HepG2 (cell line): ENCODE measurements at regions of chr15 and their contacts with region 1.

Region 1: GRCh38 chr15:47720555-47720954 is 3.2 kb downstream of the SEMA6D start:
- DNase-seq: no peak
- ATAC-seq: no peak
- H3K4me3 ChIP-seq: no peak overlapping the region
- H3K27ac ChIP-seq: no peak overlapping the region
- H3K4me1 ChIP-seq: no peaks in the 10 kb centered on the region
- H3K27me3 ChIP-seq: peaks cover 2 to 32% of the 10 kb centered on the region in 2 experiments; a peak in 3 of 5 replicates
- CTCF ChIP-seq: no peak
- EP300 ChIP-seq: no peak
- POLR2A ChIP-seq: no peak
- RAD21 ChIP-seq: no peak

Region 2: GRCh38 chr15:48046813-48047438 is 326.4 kb after region 1 on chr15:
- CTCF ChIA-PET with region 1: no interaction called
- POLR2A ChIA-PET with region 1: no interaction called
- in situ Hi-C with region 1: no loop called
- intact Hi-C with region 1: no loop called
- DNase-seq: no peak
- ATAC-seq: no peak
- H3K4me3 ChIP-seq: no peak overlapping the region
- H3K27ac ChIP-seq: no peak overlapping the region
- H3K4me1 ChIP-seq: no peaks in the 10 kb centered on the region
- H3K27me3 ChIP-seq: no peaks in the 10 kb centered on the region
- CTCF ChIP-seq: no peak
- EP300 ChIP-seq: no peak
- POLR2A ChIP-seq: no peak
- RAD21 ChIP-seq: no peak

Region 3: GRCh38 chr15:49530106-49530505 is 1809.6 kb after region 1 on chr15:
- CTCF ChIA-PET with region 1: no interaction called
- POLR2A ChIA-PET with region 1: no interaction called
- in situ Hi-C with region 1: no loop called
- intact Hi-C with region 1: loop called (anchors 5 kb)
- DNase-seq: peak; percentile 3
- ATAC-seq: no peak
- H3K4me3 ChIP-seq: no peak overlapping the region
- H3K27ac ChIP-seq: no peak overlapping the region
- H3K4me1 ChIP-seq: no peaks in the 10 kb centered on the region
- H3K27me3 ChIP-seq: no peaks in the 10 kb centered on the region
- CTCF ChIP-seq: no peak
- EP300 ChIP-seq: no peak
- POLR2A ChIP-seq: no peak
- RAD21 ChIP-seq: no peak